ENCODE measurements at regions of chr17 and their contacts with region 1.

Region 1: DNA sequence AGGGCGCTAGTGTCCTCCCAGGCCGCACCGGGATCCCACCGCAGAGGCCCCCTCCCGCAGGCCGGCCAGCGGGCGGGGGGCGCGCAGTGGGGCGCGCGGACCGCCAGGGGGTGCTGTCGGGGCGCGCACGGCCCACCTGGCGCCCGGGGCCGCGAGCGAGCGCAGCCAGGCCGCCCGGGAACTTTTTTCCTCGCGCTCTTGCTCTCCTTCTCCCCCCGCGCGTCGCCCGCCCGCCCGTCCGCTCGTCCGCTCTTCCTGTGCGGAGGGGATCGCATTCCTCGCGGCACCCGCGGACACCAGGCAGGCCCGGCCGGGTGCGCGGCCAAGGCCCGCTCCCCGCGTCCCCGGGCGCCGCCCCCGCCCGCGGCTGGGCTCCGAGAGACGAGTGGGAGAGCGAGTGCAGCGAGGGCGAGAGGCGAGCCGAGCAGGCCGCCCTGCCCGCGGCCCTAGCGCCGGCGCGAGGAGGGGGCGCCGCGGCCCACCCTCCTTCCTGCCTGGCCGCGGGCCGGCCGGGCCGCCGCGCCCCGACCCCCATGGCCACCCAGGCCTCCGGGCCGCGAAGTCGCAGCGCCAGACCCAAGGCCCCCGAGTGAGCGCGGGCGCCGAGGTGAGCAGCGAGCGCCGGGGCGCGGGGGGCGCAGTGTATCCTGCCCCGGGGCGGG is at the start of gene RAI1:
- DNase-seq: peak; percentile 77 to 92 (median 90)
- ATAC-seq: peak; percentile 64
- H3K4me3 ChIP-seq: peak within 1 kb of the TSS; percentile 57 to 85
- H3K27ac ChIP-seq: peak within 1 kb of the TSS; percentile 91 to 96
- H3K4me1 ChIP-seq: peaks cover 32 to 38% of the 10 kb centered on the region in 2 donors
- H3K27me3 ChIP-seq: no peaks in the 10 kb centered on the region
- CTCF ChIP-seq: peak; percentile 62 to 80
- polyA plus RNA-seq, gene RAI1: 28.8 to 43.8 (median 36.1) TPM

Region 2: GRCh38 chr17:17778308-17779014 is 97.1 kb after region 1 on chr17:
- intact Hi-C with region 1: loop called in 1 of 2 experiments (anchors 5 kb)
- DNase-seq: peak in 3 of 4 donors; percentile 80 to 97 (median 96)
- ATAC-seq: peak; percentile 3
- H3K4me3 ChIP-seq: no peak overlapping the region
- H3K27ac ChIP-seq: peak overlapping the region in 1 of 2 donors; percentile 83
- H3K4me1 ChIP-seq: peaks cover 24 to 43% of the 10 kb centered on the region in 2 donors
- H3K27me3 ChIP-seq: peaks cover 0 to 31% of the 10 kb centered on the region in 2 donors
- CTCF ChIP-seq: no peak

Region 3: GRCh38 chr17:17859909-17860765 is 178.8 kb after region 1 on chr17:
- intact Hi-C with region 1: loop called in 1 of 2 experiments (anchors 10 kb)
- DNase-seq: peak in 3 of 4 donors; percentile 75 to 91 (median 77)
- ATAC-seq: peak; percentile 97
- H3K4me3 ChIP-seq: no peak overlapping the region
- H3K27ac ChIP-seq: peak overlapping the region; percentile 24 to 30
- H3K4me1 ChIP-seq: peaks cover 7 to 14% of the 10 kb centered on the region in 2 donors
- H3K27me3 ChIP-seq: no peaks in the 10 kb centered on the region
- CTCF ChIP-seq: peak; percentile 92 to 95

Measured in left lung (tissue), 14 donors.